Right ventricle myocardium superior (tissue), 1 donor: ENCODE measurements at regions of chr7 and their contacts with region 1.

Region 1: GRCh38 chr7:95589031-95589430 is 7.3 kb downstream of the PDK4 start:
- DNase-seq: no peak
- ATAC-seq: no peak

Region 2: GRCh38 chr7:94877731-94878670 is 711.0 kb before region 1 on chr7:
- intact Hi-C with region 1: no loop called
- DNase-seq: no peak
- ATAC-seq: no peak

Region 3: GRCh38 chr7:95549818-95550529 is 39.1 kb before region 1 on chr7:
- intact Hi-C with region 1: loop called (anchors 5 kb)
- DNase-seq: peak; percentile 92
- ATAC-seq: peak; percentile 96